Activated CD4-positive, alpha-beta T cell treated with anti-CD3 and anti-CD28 coated beads for 36 hours (primary cell): ENCODE measurements at regions of chrX and their contacts with region 1.

Region 1: DNA sequence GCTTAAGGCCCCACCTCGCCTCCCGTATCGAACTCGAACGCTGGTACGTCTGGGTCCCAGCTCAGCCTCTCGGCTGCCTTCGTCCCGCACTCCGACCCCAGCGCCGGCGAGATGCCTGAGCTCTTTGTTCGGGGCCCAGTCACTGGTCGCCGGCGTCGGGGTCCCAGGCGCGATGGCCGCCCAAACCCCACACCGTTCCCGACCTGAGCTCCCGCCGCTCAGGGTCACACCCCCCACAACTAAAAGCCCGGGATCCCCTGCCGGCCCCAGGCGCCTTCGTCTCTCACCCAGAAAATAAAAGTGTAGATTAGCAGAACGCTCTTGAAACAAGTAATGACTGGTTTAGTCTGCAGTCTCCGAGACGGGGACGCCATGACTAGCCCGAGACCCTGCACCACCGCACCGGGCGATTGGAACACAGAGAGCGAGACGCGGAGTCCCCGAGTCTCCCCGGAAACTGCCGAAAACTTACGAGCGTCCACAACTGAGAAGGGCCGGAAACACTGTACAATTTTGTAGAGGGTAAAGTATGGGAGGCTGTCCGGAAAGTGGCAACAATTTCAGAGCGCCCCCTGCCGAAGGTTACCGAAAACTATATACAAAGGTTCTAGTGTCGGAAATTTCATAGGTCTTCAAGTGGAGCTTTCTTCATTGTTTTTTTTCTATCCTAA is at the start of gene TSPAN6:
- DNase-seq: peak; percentile 84
- ATAC-seq: peak; percentile 100
- H3K4me3 Mint-ChIP-seq: peak within 1 kb of the TSS; percentile 75
- H3K27ac Mint-ChIP-seq: peak within 1 kb of the TSS; percentile 83
- H3K4me1 Mint-ChIP-seq: peaks cover 6% of the 10 kb centered on the region
- H3K27me3 Mint-ChIP-seq: peaks cover 8% of the 10 kb centered on the region
- total RNA-seq, gene TSPAN6: 0.41 to 0.47 TPM

Region 2: DNA sequence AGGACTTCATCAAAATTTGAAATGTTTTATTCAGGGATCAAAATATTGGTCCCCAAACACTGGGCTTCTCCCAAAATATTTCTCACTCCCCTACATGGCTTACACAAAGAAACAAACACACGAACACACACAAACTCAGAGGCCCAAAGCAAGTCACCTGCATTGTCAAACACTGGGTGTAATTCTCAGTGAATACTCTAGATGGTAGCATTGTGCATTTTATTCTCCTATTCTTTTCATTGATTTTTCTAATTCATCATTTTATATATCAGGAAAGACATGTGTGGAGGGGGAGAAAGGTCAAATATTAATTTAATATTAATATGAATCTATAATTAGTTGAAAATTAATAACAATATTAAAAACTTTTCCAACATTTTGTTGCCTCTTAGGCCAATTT is 124.0 kb before region 1 on chrX:
- CTCF ChIA-PET with region 1: interaction called, 6 read pairs
- POLR2A ChIA-PET with region 1: no interaction called
- intact Hi-C with region 1: loop called in 1 of 2 experiments (anchors 1 kb)
- DNase-seq: no peak
- ATAC-seq: no peak
- H3K4me3 Mint-ChIP-seq: no peak overlapping the region
- H3K27ac Mint-ChIP-seq: no peak overlapping the region
- H3K4me1 Mint-ChIP-seq: no peaks in the 10 kb centered on the region
- H3K27me3 Mint-ChIP-seq: peaks cover 4% of the 10 kb centered on the region

Region 3: GRCh38 chrX:100615005-100615404 is 21.5 kb before region 1 on chrX:
- CTCF ChIA-PET with region 1: interaction called, 6 read pairs
- POLR2A ChIA-PET with region 1: no interaction called
- intact Hi-C with region 1: loop called in 1 of 2 experiments (anchors 1 kb)
- DNase-seq: peak; percentile 7
- ATAC-seq: peak; percentile 94
- H3K4me3 Mint-ChIP-seq: no peak overlapping the region
- H3K27ac Mint-ChIP-seq: no peak overlapping the region
- H3K4me1 Mint-ChIP-seq: no peaks in the 10 kb centered on the region
- H3K27me3 Mint-ChIP-seq: peaks cover 13% of the 10 kb centered on the region